ENCODE measurements at regions of chr7 and their contacts with region 1.

Region 1: DNA sequence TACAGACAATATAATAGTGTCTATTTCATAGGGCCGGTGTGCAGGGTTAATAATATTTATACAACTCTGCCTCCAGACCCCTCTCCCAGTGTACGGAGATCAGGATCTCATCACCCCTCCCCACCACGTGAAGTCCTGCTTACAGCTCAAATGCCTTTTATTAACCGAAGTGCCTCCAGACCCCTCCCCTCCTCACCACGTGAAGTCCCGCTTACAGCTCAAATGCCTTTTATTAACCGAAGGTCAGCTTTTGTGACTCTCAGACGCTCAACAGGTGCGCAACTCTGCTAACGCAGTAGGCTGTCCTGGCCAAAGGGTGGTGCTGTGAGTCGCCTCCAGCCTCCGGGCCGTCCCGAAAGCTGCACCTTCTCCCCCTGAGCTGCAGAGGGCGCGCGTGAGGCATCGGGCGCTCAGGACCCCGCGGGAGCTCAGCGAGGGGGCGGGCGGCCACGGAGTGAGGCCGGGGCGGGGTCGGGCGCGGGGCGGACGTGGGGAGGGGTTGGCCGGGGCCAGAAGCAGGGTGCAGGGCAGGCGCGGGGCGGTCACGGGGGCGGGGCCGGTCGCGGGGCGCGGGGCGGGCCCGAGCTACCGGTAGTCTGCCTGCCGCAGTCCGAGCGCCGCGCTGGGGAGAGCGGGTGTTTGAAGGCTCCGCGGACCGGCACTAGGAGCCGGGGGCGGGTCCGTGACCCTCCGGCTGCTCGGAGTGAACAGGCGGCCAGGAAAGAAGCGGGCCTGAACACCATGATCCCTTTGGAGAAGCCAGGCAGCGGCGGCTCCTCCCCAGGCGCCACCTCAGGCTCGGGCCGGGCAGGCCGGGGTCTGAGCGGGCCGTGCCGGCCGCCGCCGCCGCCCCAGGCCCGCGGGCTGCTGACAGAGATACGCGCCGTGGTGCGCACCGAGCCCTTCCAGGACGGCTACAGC is at the start of gene STK17A:
- DNase-seq: peak; percentile 75 to 93
- ATAC-seq: peak; percentile 85 to 91
- H3K4me3 ChIP-seq: peak within 1 kb of the TSS; percentile 88
- H3K27ac ChIP-seq: peak within 1 kb of the TSS; percentile 87 to 94
- H3K4me1 ChIP-seq: peaks cover 39% of the 10 kb centered on the region
- CTCF ChIP-seq: peak; percentile 99
- EP300 ChIP-seq: no peak
- POLR2A ChIP-seq: peak; percentile 97
- RAD21 ChIP-seq: peak; percentile 96 to 100
- polyA plus RNA-seq, gene STK17A: 20.2 and 27.3 TPM in 2 replicates

Region 2: GRCh38 chr7:43537765-43538403 is 44.9 kb before region 1 on chr7:
- CTCF ChIA-PET with region 1: no interaction called
- POLR2A ChIA-PET with region 1: no interaction called
- DNase-seq: no peak
- ATAC-seq: no peak
- H3K4me3 ChIP-seq: no peak overlapping the region
- H3K27ac ChIP-seq: no peak overlapping the region
- H3K4me1 ChIP-seq: no peaks in the 10 kb centered on the region
- CTCF ChIP-seq: no peak
- EP300 ChIP-seq: no peak
- POLR2A ChIP-seq: no peak
- RAD21 ChIP-seq: no peak

Region 3: GRCh38 chr7:43553999-43554398 is 28.8 kb before region 1 on chr7:
- CTCF ChIA-PET with region 1: interaction called, 10 read pairs
- POLR2A ChIA-PET with region 1: interaction called, 4 read pairs
- DNase-seq: no peak
- ATAC-seq: peak in 1 of 2 experiments; percentile 33; a peak in 1 of 6 replicates
- H3K4me3 ChIP-seq: no peak overlapping the region
- H3K27ac ChIP-seq: no peak overlapping the region
- H3K4me1 ChIP-seq: no peaks in the 10 kb centered on the region
- CTCF ChIP-seq: no peak
- EP300 ChIP-seq: no peak
- POLR2A ChIP-seq: no peak
- RAD21 ChIP-seq: no peak

Region 4: DNA sequence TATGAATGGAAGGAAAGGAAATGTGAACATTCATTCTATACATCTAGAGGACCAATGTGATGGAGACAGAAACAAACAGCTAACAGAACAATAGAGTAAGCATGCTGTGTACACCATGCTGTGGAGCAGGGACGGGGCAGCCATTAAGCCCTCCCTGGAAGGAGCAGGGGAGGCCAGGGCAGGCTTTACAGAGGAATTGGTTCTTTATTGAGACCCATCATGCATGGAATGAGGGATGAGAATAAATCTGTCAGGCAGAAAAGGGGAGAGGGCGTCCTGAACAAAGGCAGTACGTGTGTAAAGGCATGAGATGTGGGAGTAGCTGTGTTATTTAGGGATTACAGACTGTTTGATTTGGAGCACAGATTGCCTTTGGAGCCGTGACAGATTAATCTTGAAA is 35.3 kb after region 1 on chr7:
- CTCF ChIA-PET with region 1: interaction called, 20 read pairs
- POLR2A ChIA-PET with region 1: interaction called, 7 read pairs
- DNase-seq: no peak
- ATAC-seq: peak in 1 of 2 experiments; percentile 11; a peak in 1 of 6 replicates
- H3K4me3 ChIP-seq: no peak overlapping the region
- H3K27ac ChIP-seq: no peak overlapping the region
- H3K4me1 ChIP-seq: peaks cover 13% of the 10 kb centered on the region
- CTCF ChIP-seq: no peak
- EP300 ChIP-seq: no peak
- POLR2A ChIP-seq: no peak
- RAD21 ChIP-seq: no peak

Region 5: GRCh38 chr7:43660141-43660540 is 77.4 kb after region 1 on chr7:
- CTCF ChIA-PET with region 1: interaction called, 10 read pairs
- POLR2A ChIA-PET with region 1: no interaction called
- DNase-seq: no peak
- ATAC-seq: peak; percentile 18 to 42; a peak in 2 of 6 replicates
- H3K4me3 ChIP-seq: no peak overlapping the region
- H3K27ac ChIP-seq: peak overlapping the region; percentile 87 to 94
- H3K4me1 ChIP-seq: peaks cover 61% of the 10 kb centered on the region
- CTCF ChIP-seq: no peak
- EP300 ChIP-seq: no peak
- POLR2A ChIP-seq: no peak
- RAD21 ChIP-seq: no peak

Region 6: DNA sequence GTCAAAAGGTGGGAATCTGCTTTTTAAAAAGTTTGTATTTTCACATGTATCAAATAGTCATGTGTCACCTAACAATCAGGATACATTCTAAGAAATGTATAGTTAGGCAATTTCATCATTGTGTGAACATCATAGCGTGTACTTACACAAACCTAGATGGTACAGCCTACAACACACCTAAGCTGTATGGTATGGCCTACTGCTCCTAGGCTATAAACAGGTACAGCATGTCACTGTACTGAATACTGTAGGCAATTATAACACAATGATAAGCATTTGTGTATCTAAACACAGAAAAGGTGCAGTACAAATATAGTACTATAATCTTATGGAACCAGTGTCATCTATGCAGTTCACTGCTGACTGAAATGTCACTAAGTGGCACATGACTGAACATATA is 128.7 kb after region 1 on chr7:
- CTCF ChIA-PET with region 1: interaction called, 45 read pairs
- POLR2A ChIA-PET with region 1: no interaction called
- DNase-seq: no peak
- ATAC-seq: no peak
- H3K4me3 ChIP-seq: no peak overlapping the region
- H3K27ac ChIP-seq: no peak overlapping the region
- H3K4me1 ChIP-seq: no peaks in the 10 kb centered on the region
- CTCF ChIP-seq: no peak
- EP300 ChIP-seq: no peak
- POLR2A ChIP-seq: no peak
- RAD21 ChIP-seq: no peak

Region 7: DNA sequence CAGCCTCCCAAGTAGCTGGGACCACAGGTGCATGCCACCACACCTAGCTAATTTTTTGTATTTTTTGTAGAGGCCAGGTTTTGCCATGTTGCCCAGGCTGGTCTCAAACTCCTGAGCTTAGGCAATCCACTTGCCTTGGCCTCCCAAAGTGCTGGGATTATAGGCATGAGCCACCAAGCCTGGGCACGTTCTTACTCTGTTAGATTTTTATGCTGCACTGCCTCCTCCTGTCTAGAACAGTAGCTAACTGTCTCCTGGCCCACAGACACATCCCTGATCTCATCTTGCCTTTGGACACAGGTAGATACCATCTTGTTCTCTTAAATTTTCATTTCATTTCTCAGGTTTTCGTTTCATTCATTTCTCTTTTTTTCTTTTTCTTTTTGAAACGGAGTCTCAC is 216.8 kb after region 1 on chr7:
- CTCF ChIA-PET with region 1: interaction called, 11 read pairs
- POLR2A ChIA-PET with region 1: no interaction called
- DNase-seq: peak in 1 of 2 experiments; percentile 23
- ATAC-seq: peak in 1 of 2 experiments; percentile 59; a peak in 1 of 6 replicates
- H3K4me3 ChIP-seq: no peak overlapping the region
- H3K27ac ChIP-seq: no peak overlapping the region
- H3K4me1 ChIP-seq: no peaks in the 10 kb centered on the region
- CTCF ChIP-seq: 0 out of 3 replicates have a peak, but pooled peaks have one; percentile 13
- EP300 ChIP-seq: no peak
- POLR2A ChIP-seq: no peak
- RAD21 ChIP-seq: peak; percentile 24 to 41; a peak in 1 of 5 replicates